ENCODE measurements at regions of chr11 and their contacts with region 1.

Region 1: GRCh38 chr11:133956650-133957633 is at the start of gene IGSF9B:
- DNase-seq: peak in 1 of 2 donors; percentile 92
- H3K4me3 ChIP-seq: peak within 1 kb of the TSS; percentile 74 to 86
- H3K27ac ChIP-seq: peak within 1 kb of the TSS; percentile 87 to 93
- H3K4me1 ChIP-seq: peaks cover 10 to 35% of the 10 kb centered on the region in 2 donors
- H3K27me3 ChIP-seq: no peaks in the 10 kb centered on the region
- CTCF ChIP-seq: peak in 1 of 3 experiments; percentile 21
- total RNA-seq, gene IGSF9B: 162 TPM

Region 2: GRCh38 chr11:133966921-133967598 is 10.1 kb after region 1 on chr11:
- intact Hi-C with region 1: loop called (anchors 1 kb)
- DNase-seq: no peak
- H3K4me3 ChIP-seq: no peak overlapping the region
- H3K27ac ChIP-seq: no peak overlapping the region
- H3K4me1 ChIP-seq: peaks cover 4 to 13% of the 10 kb centered on the region in 2 donors
- H3K27me3 ChIP-seq: no peaks in the 10 kb centered on the region
- CTCF ChIP-seq: peak in 2 of 3 experiments; percentile 44 to 45

Region 3: DNA sequence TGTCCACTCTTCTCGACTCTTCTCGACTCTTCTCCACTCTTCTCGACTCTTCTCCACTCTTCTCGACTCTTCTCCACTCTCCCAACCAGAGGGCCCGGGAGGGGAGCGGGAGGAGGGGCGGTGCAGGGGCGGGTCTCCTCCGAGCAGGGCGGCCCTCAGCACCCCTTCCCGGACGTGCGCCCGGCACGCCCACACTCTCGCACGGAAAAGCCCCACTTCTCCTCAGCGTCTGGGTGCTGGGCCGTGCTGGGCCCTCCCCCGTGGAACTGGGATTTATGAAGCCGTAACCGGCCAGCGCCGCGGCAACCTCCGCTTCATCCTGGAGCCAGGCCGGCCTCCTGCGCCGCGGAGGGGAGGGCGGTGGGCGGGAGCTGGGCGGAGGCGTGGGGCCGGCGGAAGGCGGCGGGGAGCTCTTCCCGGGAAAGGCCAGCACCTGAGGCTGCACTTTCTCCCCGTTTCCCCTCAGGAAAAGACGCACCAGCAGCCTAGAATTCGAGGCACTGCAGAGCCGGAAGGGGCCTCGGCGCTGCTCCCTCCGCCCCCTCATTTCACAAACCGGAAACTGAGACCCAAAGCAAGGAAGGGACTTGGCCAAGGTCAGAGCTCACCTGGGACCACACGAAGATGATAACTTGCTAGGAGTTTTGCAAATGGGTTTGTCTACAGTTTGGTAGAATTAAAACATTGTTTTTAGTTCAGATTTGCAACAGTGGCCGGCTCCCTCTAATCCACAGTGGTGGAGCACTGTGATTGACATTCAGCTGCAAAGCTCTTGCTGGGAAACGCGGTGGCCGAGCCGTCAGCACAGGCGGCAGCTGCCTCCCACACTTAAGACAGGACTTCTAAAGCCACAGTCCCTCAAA is 80.3 kb after region 1 on chr11:
- intact Hi-C with region 1: loop called (anchors 1 kb)
- DNase-seq: peak in 1 of 2 donors; percentile 86
- H3K4me3 ChIP-seq: peak overlapping the region; percentile 58 to 70
- H3K27ac ChIP-seq: peak overlapping the region; percentile 87 to 89
- H3K4me1 ChIP-seq: peaks cover 23 to 36% of the 10 kb centered on the region in 2 donors
- H3K27me3 ChIP-seq: no peaks in the 10 kb centered on the region
- CTCF ChIP-seq: no peak

Region 4: GRCh38 chr11:134124660-134125451 is 167.9 kb after region 1 on chr11:
- intact Hi-C with region 1: loop called (anchors 5 kb)
- DNase-seq: no peak
- H3K4me3 ChIP-seq: peak overlapping the region; percentile 56 to 70
- H3K27ac ChIP-seq: peak overlapping the region; percentile 61 to 90
- H3K4me1 ChIP-seq: peaks cover 19 to 41% of the 10 kb centered on the region in 2 donors
- H3K27me3 ChIP-seq: no peaks in the 10 kb centered on the region
- CTCF ChIP-seq: peak in 1 of 3 experiments; percentile 17

Region 5: GRCh38 chr11:134830312-134830711 is 873.4 kb after region 1 on chr11:
- intact Hi-C with region 1: no loop called
- DNase-seq: no peak
- H3K4me3 ChIP-seq: no peak overlapping the region
- H3K27ac ChIP-seq: no peak overlapping the region
- H3K4me1 ChIP-seq: no peaks in the 10 kb centered on the region
- H3K27me3 ChIP-seq: no peaks in the 10 kb centered on the region
- CTCF ChIP-seq: no peak

Measured in ascending aorta (tissue), 2 donors.